Naive thymus-derived CD8-positive, alpha-beta T cell (primary cell): ENCODE measurements at regions of chr19 and their contacts with region 1.

Region 1: DNA sequence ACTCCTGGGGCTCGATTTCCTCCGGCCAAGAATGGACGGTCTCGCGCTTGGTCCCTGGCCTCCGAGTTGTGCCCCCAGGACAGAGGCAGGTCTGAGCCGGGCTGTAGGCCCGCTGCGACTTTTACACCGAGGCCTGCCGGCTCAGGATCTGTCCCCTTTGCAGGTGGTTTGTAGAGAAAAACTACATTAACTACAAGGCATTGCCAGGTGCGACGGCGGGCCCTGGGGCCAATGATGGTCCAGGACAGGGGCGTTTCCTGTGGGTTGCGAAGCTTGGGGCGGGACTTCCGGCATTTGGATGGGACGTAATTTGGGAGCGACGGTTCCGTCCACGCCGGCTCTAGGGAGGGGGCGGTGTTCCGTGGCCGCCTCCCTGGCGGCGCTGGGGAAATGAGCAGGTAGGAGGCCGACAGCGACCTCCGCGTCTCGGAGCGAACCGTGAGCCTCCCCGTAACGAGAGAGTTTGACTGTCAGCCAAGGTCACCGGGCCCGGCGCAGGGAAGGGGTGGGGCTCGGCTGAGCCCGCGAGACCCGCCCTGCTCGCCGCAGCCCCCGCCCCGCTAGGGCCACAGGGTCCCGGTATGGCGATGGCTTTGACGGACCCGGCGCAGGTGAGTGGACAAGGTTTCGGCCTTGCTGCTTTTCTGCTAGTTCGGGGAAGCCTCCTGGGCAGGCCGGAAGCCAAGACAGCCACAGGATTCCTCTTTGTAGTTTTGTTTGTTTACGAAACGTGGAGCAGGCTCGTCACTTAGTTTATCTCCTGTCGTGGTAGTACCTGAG is at the start of gene ZNF805:
- DNase-seq: peak; percentile 92 to 98 (median 96)
- ATAC-seq: peak; percentile 92 to 93
- H3K4me3 Mint-ChIP-seq: peak within 1 kb of the TSS; percentile 90 to 97 (median 94)
- H3K27ac Mint-ChIP-seq: peak within 1 kb of the TSS; percentile 94 to 99 (median 98)
- H3K4me1 Mint-ChIP-seq: peaks cover 14 to 39% (median 36%) of the 10 kb centered on the region in 4 donors
- H3K27me3 Mint-ChIP-seq: no peaks in the 10 kb centered on the region
- polyA plus RNA-seq, gene ZNF805: 3.2 to 3.8 (median 3.6) TPM

Region 2: DNA sequence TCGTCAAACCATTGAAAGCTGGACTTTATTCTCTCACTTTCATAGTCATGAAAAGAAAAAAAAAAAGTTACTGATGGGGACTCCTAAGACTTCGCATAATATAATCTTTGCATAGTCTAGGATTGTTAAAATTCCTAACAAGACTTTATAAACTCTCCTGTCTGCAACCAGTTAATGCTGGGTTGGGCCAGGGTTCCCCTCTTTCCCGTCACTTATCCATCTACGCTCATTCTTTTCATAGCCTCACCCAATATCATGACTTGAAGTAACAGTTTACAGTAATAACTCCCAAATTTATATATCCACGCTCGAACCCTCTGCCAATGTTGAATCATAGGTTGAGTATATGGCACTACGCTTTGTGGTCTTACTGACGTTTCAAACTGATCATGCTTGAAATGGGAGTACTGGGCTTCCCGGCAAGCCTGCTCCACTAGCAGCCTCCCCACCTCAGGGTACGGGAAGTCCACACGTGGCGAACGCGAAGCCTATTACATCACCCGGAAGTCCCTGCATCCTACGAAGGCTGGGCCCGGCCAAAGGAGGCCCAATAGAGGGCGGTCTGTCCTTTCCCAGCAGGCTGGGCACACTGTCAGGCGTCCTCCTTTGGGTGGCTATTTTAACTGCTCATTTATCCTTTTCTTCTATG is 39.0 kb after region 1 on chr19:
- POLR2A ChIA-PET with region 1: interaction called, 11 read pairs
- DNase-seq: peak in 8 of 10 donors; percentile 53 to 91 (median 74)
- ATAC-seq: peak; percentile 73 to 74
- H3K4me3 Mint-ChIP-seq: peak overlapping the region in 1 of 10 donors; percentile 39
- H3K27ac Mint-ChIP-seq: peak overlapping the region in 1 of 10 donors; percentile 69
- H3K4me1 Mint-ChIP-seq: peaks cover 16 to 34% (median 28%) of the 10 kb centered on the region in 4 donors
- H3K27me3 Mint-ChIP-seq: no peaks in the 10 kb centered on the region